Activated CD8-positive, alpha-beta T cell treated with anti-CD3 and anti-CD28 coated beads, Interleukin-2, amount 10 ng/mL, durations not matched to agents 7 days and 5 days (primary cell): ENCODE measurements at regions of chr1 and their contacts with region 1.

Region 1: GRCh38 chr1:160550572-160551034 is 27.5 kb upstream of the SLAMF6 start:
- DNase-seq: peak; percentile 57
- ATAC-seq: peak; percentile 53
- H3K4me3 Mint-ChIP-seq: no peak overlapping the region
- H3K27ac Mint-ChIP-seq: no peak overlapping the region
- H3K4me1 Mint-ChIP-seq: no peaks in the 10 kb centered on the region
- H3K27me3 Mint-ChIP-seq: no peaks in the 10 kb centered on the region

Region 2: GRCh38 chr1:160567858-160568682 is 17.5 kb after region 1 on chr1:
- CTCF ChIA-PET with region 1: interaction called, 11 read pairs
- POLR2A ChIA-PET with region 1: no interaction called
- DNase-seq: peak; percentile 80
- ATAC-seq: peak; percentile 85
- H3K4me3 Mint-ChIP-seq: peak overlapping the region; percentile 64
- H3K27ac Mint-ChIP-seq: peak overlapping the region; percentile 99
- H3K4me1 Mint-ChIP-seq: peaks cover 75% of the 10 kb centered on the region
- H3K27me3 Mint-ChIP-seq: no peaks in the 10 kb centered on the region